A549 (cell line): ENCODE measurements at regions of chr6 and their contacts with region 1.

Region 1: DNA sequence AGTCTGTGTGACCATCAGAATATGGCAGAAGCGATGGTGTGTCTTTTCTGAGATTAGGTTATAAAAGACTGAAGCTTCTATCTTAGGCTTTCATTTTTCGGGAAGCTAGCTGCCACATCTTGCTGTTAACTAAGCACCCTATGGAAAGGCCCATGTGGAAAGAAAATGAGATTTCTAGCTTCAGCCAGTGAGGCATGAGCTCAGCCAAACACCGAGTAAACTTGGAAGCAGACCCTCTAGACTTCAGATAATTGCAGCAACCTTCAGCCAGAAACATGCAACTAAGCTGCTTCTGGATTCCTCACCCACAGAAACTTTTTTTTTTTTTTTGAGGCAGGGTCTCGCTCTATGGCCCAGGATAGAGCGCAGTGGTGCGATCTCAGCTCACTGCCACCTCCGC is 20.6 kb downstream of the LOC128125822 start:
- DNase-seq: no peak
- ATAC-seq: no peak
- H3K4me3 ChIP-seq: no peak overlapping the region
- H3K27ac ChIP-seq: no peak overlapping the region
- H3K4me1 ChIP-seq: peaks cover 6% of the 10 kb centered on the region; the same call in 2 of the 3 replicates
- CTCF ChIP-seq: no peak
- EP300 ChIP-seq: no peak
- POLR2A ChIP-seq: no peak
- RAD21 ChIP-seq: no peak

Region 2: GRCh38 chr6:63764318-63764916 is 171.5 kb after region 1 on chr6:
- CTCF ChIA-PET with region 1: interaction called, 10 read pairs
- POLR2A ChIA-PET with region 1: no interaction called
- DNase-seq: peak in 1 of 2 experiments; percentile 36
- ATAC-seq: no peak
- H3K4me3 ChIP-seq: no peak overlapping the region
- H3K27ac ChIP-seq: no peak overlapping the region
- H3K4me1 ChIP-seq: no peaks in the 10 kb centered on the region
- CTCF ChIP-seq: peak; percentile 42; the same call in 2 of the 3 replicates
- EP300 ChIP-seq: no peak
- POLR2A ChIP-seq: no peak
- RAD21 ChIP-seq: peak; percentile 56 to 73